ENCODE measurements at regions of chr2 and their contacts with region 1.

Region 1: DNA sequence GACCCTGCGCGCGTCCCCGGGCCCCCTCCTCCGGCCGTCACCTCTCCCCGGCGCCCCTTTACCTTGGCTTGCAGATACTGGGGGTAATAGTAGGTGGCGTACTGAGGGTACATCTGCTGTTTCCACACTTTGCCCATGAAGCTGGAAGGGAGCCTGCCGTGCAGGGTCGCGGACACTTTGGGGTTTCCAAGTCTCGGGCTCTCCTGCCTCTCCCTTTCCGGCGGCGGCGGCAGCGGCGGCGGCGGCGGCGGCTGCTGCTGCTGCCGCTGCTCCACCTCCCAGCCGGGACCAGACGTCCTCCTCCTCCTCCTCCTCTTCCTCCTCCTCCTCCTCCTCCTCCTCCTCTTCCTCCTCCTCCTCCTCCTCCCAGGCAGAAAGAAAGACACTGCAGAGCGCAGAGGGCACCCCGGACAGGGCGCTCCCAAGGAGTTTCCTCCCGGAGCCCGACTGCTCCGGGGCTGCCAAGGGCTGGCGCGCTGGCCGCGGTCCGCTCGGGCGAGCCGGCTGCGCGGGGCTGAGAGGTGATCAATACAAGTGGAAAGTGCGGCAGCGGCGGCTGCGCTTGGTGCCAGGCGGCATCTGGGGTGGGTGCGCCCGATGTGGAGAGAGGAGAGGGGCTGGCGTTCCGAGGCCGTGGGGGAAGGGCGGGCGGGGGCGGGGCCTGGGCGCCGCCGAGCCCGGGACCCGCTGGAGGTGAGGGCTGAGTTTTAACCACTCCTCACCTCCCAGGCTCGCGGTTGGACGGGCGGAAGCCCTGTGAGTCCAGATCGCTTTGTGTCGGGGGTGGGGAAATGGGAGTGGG is at the start of gene RBMS1:
- DNase-seq: peak; percentile 44
- ATAC-seq: peak; percentile 47
- H3K4me3 ChIP-seq: peak within 1 kb of the TSS; percentile 98
- H3K27ac ChIP-seq: peak within 1 kb of the TSS; percentile 100
- H3K4me1 ChIP-seq: peaks cover 6% of the 10 kb centered on the region
- H3K27me3 ChIP-seq: no peaks in the 10 kb centered on the region
- CTCF ChIP-seq: no peak
- POLR2A ChIP-seq: no peak
- RAD21 ChIP-seq: peak; percentile 26; the same call in 1 of the 2 replicates
- total RNA-seq, gene RBMS1: 64.9 and 73.6 TPM in 2 replicates

Region 2: DNA sequence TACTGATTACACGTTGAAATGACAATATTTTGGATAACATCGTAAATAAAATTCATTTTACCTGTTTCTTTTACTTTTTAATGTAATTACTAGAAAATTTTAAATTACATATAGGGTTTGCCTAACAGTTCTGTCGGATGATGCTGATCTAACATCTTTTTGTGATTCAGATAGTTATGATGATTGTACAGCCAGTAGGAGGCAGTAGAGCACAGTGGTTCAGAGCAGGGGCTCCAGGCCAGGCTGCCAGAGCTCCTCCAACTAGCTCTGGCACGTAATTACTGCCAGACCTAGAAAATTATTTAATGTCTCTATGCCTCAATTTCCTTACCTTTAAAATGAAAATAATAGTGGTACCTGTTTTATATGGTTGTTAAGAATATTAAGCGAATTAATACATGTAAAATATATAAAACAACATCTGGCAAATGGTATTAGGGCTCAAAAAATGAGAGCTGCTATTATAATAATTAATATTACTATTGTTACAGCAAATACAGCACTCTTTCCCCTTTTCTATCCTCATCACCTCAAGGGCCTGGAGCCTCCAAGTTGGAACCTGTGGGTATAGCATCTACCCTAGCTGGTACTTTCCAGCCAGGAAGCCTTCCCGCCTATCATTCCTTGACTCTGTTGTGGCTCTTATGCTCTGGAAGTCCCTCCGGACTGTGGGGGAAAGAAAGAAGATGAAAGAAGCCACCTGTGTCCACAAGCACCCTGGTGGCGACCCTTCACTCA is 383.3 kb before region 1 on chr2:
- CTCF ChIA-PET with region 1: no interaction called
- POLR2A ChIA-PET with region 1: no interaction called
- dilution Hi-C with region 1: no loop called
- in situ Hi-C with region 1: no loop called
- intact Hi-C with region 1: loop called (anchors 10 kb)
- DNase-seq: peak; percentile 80
- ATAC-seq: peak; percentile 97
- H3K4me3 ChIP-seq: no peak overlapping the region
- H3K27ac ChIP-seq: no peak overlapping the region
- H3K4me1 ChIP-seq: no peaks in the 10 kb centered on the region
- H3K27me3 ChIP-seq: peaks cover 2% of the 10 kb centered on the region; the same call in 1 of the 2 replicates
- CTCF ChIP-seq: peak; percentile 92
- POLR2A ChIP-seq: 0 out of 2 replicates have a peak, but pooled peaks have one; percentile 35
- RAD21 ChIP-seq: peak; percentile 99

Region 3: GRCh38 chr2:160375802-160376469 is 117.5 kb before region 1 on chr2:
- CTCF ChIA-PET with region 1: no interaction called
- POLR2A ChIA-PET with region 1: no interaction called
- dilution Hi-C with region 1: no loop called
- in situ Hi-C with region 1: no loop called
- intact Hi-C with region 1: no loop called
- DNase-seq: peak; percentile 69
- ATAC-seq: no peak
- H3K4me3 ChIP-seq: no peak overlapping the region
- H3K27ac ChIP-seq: no peak overlapping the region
- H3K4me1 ChIP-seq: peaks cover 53% of the 10 kb centered on the region
- H3K27me3 ChIP-seq: no peaks in the 10 kb centered on the region
- CTCF ChIP-seq: no peak
- POLR2A ChIP-seq: no peak
- RAD21 ChIP-seq: no peak

Region 4: GRCh38 chr2:160429248-160430000 is 64.0 kb before region 1 on chr2:
- CTCF ChIA-PET with region 1: no interaction called
- POLR2A ChIA-PET with region 1: no interaction called
- dilution Hi-C with region 1: no loop called
- in situ Hi-C with region 1: no loop called
- intact Hi-C with region 1: loop called (anchors 5 kb)
- DNase-seq: peak; percentile 75
- ATAC-seq: no peak
- H3K4me3 ChIP-seq: no peak overlapping the region
- H3K27ac ChIP-seq: peak overlapping the region; percentile 56; the same call in 1 of the 2 replicates
- H3K4me1 ChIP-seq: peaks cover 16% of the 10 kb centered on the region
- H3K27me3 ChIP-seq: no peaks in the 10 kb centered on the region
- CTCF ChIP-seq: peak; percentile 56
- POLR2A ChIP-seq: no peak
- RAD21 ChIP-seq: peak; percentile 49

Region 5: GRCh38 chr2:160666154-160667060 is 173.0 kb after region 1 on chr2:
- CTCF ChIA-PET with region 1: no interaction called
- POLR2A ChIA-PET with region 1: no interaction called
- dilution Hi-C with region 1: no loop called
- in situ Hi-C with region 1: no loop called
- intact Hi-C with region 1: loop called (anchors 5 kb)
- DNase-seq: peak; percentile 99
- ATAC-seq: peak; percentile 99
- H3K4me3 ChIP-seq: peak overlapping the region; percentile 12; the same call in 1 of the 2 replicates
- H3K27ac ChIP-seq: peak overlapping the region; percentile 60; the same call in 1 of the 2 replicates
- H3K4me1 ChIP-seq: peaks cover 2% of the 10 kb centered on the region
- H3K27me3 ChIP-seq: no peaks in the 10 kb centered on the region
- CTCF ChIP-seq: no peak
- POLR2A ChIP-seq: peak; percentile 18; the same call in 1 of the 2 replicates
- RAD21 ChIP-seq: peak; percentile 22; the same call in 1 of the 2 replicates

Region 6: GRCh38 chr2:160695402-160696086 is 202.1 kb after region 1 on chr2:
- CTCF ChIA-PET with region 1: no interaction called
- POLR2A ChIA-PET with region 1: no interaction called
- dilution Hi-C with region 1: no loop called
- in situ Hi-C with region 1: no loop called
- intact Hi-C with region 1: no loop called
- DNase-seq: peak; percentile 73
- ATAC-seq: peak; percentile 86
- H3K4me3 ChIP-seq: no peak overlapping the region
- H3K27ac ChIP-seq: peak overlapping the region; percentile 10; the same call in 1 of the 2 replicates
- H3K4me1 ChIP-seq: peaks cover 9% of the 10 kb centered on the region
- H3K27me3 ChIP-seq: no peaks in the 10 kb centered on the region
- CTCF ChIP-seq: no peak
- POLR2A ChIP-seq: no peak
- RAD21 ChIP-seq: no peak

Region 7: DNA sequence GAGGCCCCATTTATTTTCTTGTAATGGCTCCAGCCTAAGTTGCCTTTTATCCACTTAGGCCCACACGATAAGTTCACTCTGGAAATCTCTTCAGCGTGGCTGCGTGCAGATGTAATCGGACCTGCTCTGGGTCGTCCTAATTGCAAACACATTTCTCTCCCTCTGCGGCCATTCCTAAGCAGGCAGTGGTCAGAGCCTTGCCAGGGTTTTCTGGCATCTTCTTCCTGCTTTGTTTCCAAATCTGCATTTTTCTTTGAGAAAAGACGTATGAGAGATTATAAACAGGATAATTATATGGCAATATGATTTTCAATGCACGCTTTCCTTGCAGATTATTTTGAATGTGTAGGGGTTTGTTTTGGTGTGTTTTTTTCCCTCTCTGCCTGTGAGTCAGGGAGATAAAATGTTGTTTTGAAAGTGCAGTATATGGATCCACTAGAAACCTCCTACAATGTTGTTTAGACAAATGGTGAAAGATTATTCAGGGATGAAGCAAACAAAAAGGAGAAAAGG is 427.4 kb after region 1 on chr2:
- CTCF ChIA-PET with region 1: interaction called, 3 read pairs
- POLR2A ChIA-PET with region 1: no interaction called
- dilution Hi-C with region 1: no loop called
- in situ Hi-C with region 1: no loop called
- intact Hi-C with region 1: loop called (anchors 2 kb)
- DNase-seq: peak; percentile 95
- ATAC-seq: peak; percentile 87
- H3K4me3 ChIP-seq: no peak overlapping the region
- H3K27ac ChIP-seq: peak overlapping the region; percentile 97
- H3K4me1 ChIP-seq: peaks cover 16% of the 10 kb centered on the region
- H3K27me3 ChIP-seq: no peaks in the 10 kb centered on the region
- CTCF ChIP-seq: no peak
- POLR2A ChIP-seq: no peak
- RAD21 ChIP-seq: no peak

Region 8: GRCh38 chr2:161160226-161161069 is 667.0 kb after region 1 on chr2 and contains the start of gene TANK:
- CTCF ChIA-PET with region 1: no interaction called
- POLR2A ChIA-PET with region 1: no interaction called
- dilution Hi-C with region 1: no loop called
- in situ Hi-C with region 1: no loop called
- intact Hi-C with region 1: loop called (anchors 10 kb)
- DNase-seq: peak; percentile 96
- ATAC-seq: peak; percentile 94
- H3K4me3 ChIP-seq: peak within 1 kb of the TSS; percentile 68
- H3K27ac ChIP-seq: peak within 1 kb of the TSS; percentile 88
- H3K4me1 ChIP-seq: no peaks in the 10 kb centered on the region
- H3K27me3 ChIP-seq: no peaks in the 10 kb centered on the region
- CTCF ChIP-seq: no peak
- POLR2A ChIP-seq: peak; percentile 94
- RAD21 ChIP-seq: no peak
- total RNA-seq, gene TANK: 41.9 and 46.4 TPM in 2 replicates

Measured in IMR-90 (cell line).